ENCODE measurements at regions of chr4 and their contacts with region 1.

Region 1: GRCh38 chr4:15457406-15458201 is 12.1 kb upstream of the CC2D2A start:
- DNase-seq: peak in 2 of 4 donors; percentile 57 to 70
- ATAC-seq: peak; percentile 93
- H3K4me3 ChIP-seq: no peak overlapping the region
- H3K27ac ChIP-seq: peak overlapping the region in 1 of 2 donors; percentile 30
- H3K4me1 ChIP-seq: peaks cover 0 to 14% of the 10 kb centered on the region in 2 donors
- H3K27me3 ChIP-seq: no peaks in the 10 kb centered on the region
- CTCF ChIP-seq: peak; percentile 52 to 68

Region 2: DNA sequence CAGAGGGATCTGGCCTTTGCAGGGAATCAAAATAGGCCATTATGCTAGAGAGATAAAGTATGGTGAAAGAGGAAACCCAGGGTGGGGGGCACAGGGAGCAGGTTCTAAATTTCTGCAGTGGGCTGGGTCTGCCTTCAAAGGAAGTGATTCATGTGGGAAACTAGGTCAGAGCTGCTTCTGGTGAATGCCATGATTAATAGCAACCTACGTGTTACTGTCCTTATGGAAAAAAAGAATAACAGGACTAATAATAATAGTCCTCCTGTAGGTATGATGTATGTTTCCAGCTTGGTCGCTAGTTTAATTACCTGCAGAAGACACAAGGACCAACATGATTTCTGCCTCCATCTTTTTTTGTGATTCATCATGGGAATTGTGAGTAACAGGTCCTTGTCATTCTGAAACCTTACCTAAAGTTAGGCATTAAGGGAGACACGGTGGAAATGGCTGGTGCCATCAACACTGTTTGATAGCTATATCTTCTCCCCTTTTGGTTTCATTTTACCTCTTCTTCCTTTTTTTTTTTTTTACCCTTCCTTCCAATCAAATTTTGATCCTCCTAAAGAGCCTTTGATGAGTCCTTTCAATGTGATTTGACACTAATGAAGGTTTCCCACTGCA is 274.9 kb before region 1 on chr4:
- intact Hi-C with region 1: no loop called
- DNase-seq: no peak
- ATAC-seq: no peak
- H3K4me3 ChIP-seq: no peak overlapping the region
- H3K27ac ChIP-seq: no peak overlapping the region
- H3K4me1 ChIP-seq: no peaks in the 10 kb centered on the region
- H3K27me3 ChIP-seq: no peaks in the 10 kb centered on the region
- CTCF ChIP-seq: no peak

Region 3: GRCh38 chr4:15238720-15239119 is 218.9 kb before region 1 on chr4:
- intact Hi-C with region 1: loop called in 1 of 2 experiments (anchors 5 kb)
- DNase-seq: peak in 1 of 4 donors; percentile 49
- ATAC-seq: peak; percentile 88
- H3K4me3 ChIP-seq: no peak overlapping the region
- H3K27ac ChIP-seq: no peak overlapping the region
- H3K4me1 ChIP-seq: peaks cover 7 to 10% of the 10 kb centered on the region in 2 donors
- H3K27me3 ChIP-seq: no peaks in the 10 kb centered on the region
- CTCF ChIP-seq: peak; percentile 43 to 49

Region 4: GRCh38 chr4:15601862-15602261 is 144.3 kb after region 1 on chr4:
- intact Hi-C with region 1: no loop called
- DNase-seq: no peak
- ATAC-seq: no peak
- H3K4me3 ChIP-seq: no peak overlapping the region
- H3K27ac ChIP-seq: no peak overlapping the region
- H3K4me1 ChIP-seq: no peaks in the 10 kb centered on the region
- H3K27me3 ChIP-seq: no peaks in the 10 kb centered on the region
- CTCF ChIP-seq: no peak

Region 5: GRCh38 chr4:15738877-15739276 is 281.3 kb after region 1 on chr4:
- intact Hi-C with region 1: no loop called
- DNase-seq: no peak
- ATAC-seq: no peak
- H3K4me3 ChIP-seq: no peak overlapping the region
- H3K27ac ChIP-seq: no peak overlapping the region
- H3K4me1 ChIP-seq: no peaks in the 10 kb centered on the region
- H3K27me3 ChIP-seq: no peaks in the 10 kb centered on the region
- CTCF ChIP-seq: no peak

Measured in left lung (tissue), 14 donors.